ENCODE measurements at regions of chr2 and their contacts with region 1.

Region 1: GRCh38 chr2:173402405-173402974 is 47.8 kb downstream of the CDCA7 start:
- DNase-seq: peak; percentile 87 to 93
- H3K4me3 ChIP-seq: peak overlapping the region; percentile 12; the same call in 1 of the 2 replicates
- H3K4me1 ChIP-seq: peaks cover 37% of the 10 kb centered on the region
- H3K27me3 ChIP-seq: no peaks in the 10 kb centered on the region

Region 2: DNA sequence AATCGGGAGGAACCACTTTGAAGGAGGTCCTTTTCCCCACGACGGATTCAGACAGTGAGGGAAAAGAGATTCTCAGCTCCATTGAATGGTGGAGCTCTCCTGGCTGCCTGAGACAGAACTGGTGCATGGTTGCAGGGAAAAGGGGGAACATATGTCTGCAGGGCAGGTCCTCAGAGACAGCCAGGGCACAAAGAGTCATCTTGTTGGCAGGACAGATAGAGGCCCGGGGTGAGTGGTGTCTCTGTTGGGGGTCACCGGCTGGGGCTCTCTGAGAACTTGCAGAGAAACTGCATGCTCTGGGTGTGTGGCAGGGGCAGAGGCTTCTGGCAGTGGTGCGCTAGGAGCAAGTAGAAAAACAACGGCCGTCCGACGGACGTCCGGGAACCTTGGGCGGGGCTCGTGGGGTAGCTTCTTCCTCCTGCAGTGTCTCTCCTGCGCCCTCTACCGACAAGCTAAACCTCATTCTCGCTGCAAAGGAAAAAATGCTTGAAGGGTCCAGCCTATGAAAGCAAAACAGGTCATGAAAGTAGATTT is 46.5 kb after region 1 on chr2:
- in situ Hi-C with region 1: loop called (anchors 5 kb)
- DNase-seq: peak; percentile 90 to 97
- H3K4me3 ChIP-seq: peak overlapping the region; percentile 11
- H3K4me1 ChIP-seq: peaks cover 33% of the 10 kb centered on the region
- H3K27me3 ChIP-seq: no peaks in the 10 kb centered on the region

Region 3: DNA sequence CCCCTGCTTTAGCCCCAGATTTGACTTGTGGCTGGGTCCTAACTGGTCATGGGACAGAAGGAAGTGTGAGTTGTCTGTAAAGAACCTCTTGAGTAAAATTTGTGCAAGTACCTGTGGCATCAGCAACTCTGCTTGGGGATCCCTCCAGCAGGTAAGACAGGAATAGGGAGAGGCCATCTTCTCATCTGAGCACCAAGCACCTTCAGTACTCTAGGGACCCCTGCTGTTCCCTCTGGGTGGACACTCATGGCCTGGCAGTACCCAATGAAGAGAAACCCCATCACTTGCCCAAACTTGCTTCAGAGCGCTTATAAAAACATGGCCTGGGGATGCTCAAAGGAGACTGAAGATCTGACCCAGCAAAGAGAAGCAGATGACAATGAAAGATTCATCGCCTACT is 264.9 kb after region 1 on chr2:
- in situ Hi-C with region 1: loop called (anchors 10 kb)
- DNase-seq: peak; percentile 58 to 66
- H3K4me3 ChIP-seq: no peak overlapping the region
- H3K4me1 ChIP-seq: peaks cover 47% of the 10 kb centered on the region
- H3K27me3 ChIP-seq: no peaks in the 10 kb centered on the region; the same call in 1 of the 2 replicates

Region 4: DNA sequence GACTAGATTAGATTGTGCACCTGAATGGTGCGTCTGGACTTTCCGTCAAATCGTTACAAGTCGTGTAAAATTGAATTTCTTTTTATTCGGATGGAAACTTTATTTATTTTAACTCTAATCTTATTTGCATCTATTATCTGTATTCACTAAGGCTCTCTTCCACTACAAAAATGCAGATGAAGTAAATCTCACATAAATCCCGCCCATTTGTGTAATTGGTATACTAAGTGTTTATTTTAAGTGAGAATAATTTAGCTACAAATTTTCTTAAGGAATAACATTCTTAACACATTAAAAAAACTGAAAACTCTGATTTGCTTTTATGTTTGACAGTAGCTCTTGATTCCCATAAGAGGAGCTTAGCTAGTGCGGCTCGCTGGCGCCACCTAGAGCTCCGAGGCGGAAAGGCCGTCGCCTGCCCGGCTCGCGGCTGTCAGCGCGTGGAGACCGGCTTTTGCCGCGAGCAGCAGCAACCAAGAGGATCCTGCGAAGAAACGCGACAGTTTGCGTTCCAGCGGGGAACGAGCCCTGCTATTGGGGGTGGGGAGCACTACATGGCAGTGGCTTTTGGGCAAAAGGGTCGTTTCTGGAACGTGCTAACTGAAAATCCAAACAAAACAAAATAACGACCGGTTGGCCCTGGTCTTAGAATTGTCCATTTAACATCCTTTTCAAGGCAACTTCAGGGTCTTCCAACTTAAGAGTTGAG is 939.0 kb after region 1 on chr2:
- in situ Hi-C with region 1: loop called (anchors 10 kb)
- DNase-seq: peak; percentile 78 to 90
- H3K4me3 ChIP-seq: no peak overlapping the region
- H3K4me1 ChIP-seq: peaks cover 17% of the 10 kb centered on the region
- H3K27me3 ChIP-seq: peaks cover 2% of the 10 kb centered on the region; the same call in 1 of the 2 replicates